ENCODE measurements at regions of chr2 and their contacts with region 1.

Region 1: DNA sequence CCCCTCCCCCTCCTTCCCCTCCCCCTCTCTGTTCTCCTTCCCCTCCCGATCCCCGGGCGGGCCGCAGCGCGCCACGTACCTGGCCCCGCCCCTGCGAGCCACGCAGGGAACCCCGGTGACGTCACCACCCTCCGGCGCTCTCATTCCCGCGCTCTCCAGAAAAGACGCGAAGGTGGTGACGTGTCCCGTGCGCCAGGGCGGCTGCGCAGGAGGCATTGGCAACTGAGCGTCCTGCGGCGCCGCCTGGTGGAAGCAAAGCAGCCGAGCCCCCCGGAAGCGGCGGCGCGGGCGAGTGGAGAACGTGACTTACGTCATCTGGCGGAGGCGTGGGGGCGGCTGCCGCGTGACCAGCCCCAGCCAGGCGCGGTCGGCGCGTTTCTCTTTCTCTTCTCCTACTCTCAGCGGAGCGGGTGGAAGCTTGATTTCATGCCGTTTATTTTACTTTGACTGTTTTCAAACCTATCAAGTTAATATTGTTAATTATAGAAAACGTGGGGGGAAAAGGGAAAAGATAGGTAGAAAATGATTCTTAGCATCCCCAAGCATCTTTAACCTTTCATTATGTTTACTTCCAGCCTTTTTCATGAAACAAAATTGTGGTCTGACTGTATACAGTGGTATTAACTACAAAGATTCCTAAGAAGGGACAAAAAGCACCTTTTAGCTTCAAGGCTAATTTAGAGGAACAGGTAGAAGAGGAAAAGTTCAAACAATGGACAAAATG is 48.1 kb downstream of the C2orf42 start:
- DNase-seq: peak; percentile 100
- ATAC-seq: peak; percentile 75
- H3K4me3 ChIP-seq: peak overlapping the region; percentile 61 to 91 (median 71)
- H3K4me3 Mint-ChIP-seq: peak overlapping the region; percentile 91
- H3K27ac ChIP-seq: peak overlapping the region; percentile 97 to 98
- H3K27ac Mint-ChIP-seq: peak overlapping the region; percentile 98
- H3K4me1 ChIP-seq: peaks cover 24 to 32% of the 10 kb centered on the region in 2 donors
- H3K4me1 Mint-ChIP-seq: peaks cover 50% of the 10 kb centered on the region
- H3K27me3 ChIP-seq: no peaks in the 10 kb centered on the region
- H3K27me3 Mint-ChIP-seq: no peaks in the 10 kb centered on the region
- CTCF ChIP-seq: peak; percentile 88

Region 2: DNA sequence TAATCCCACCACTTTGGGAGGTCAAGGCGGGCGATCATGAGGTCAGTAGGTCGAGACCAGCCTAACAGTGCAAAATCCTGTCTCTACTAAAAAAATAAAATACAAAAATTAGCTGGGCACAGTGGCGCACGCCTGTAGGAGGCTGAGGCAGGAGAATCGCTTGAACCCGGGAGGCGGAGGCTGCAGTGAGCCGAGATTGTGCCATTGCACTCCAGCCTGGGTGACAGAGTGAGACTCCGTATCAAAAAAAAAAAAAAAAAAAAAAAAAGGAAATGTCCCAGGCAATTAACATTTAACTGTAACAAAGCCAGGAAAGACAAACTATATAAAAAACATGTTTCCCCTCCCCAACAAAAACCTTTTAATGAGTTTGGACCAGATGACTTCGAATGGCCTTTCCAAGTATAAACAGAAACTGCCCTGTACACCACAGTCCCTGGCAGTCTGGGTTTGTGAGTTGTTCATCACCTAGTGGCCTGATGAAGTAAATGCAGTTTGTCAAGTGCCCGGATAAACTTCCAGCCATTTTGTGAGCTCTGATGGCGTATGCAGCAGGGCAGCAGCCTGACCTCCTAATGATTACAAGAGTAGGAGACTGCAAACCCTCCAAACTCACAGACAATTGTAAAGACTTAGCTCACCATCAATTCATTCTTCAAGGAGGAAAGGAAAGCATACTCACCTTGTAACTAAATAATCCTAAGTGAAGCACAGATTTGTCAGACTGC is 72.0 kb before region 1 on chr2:
- CTCF ChIA-PET with region 1: interaction called, 14 read pairs
- POLR2A ChIA-PET with region 1: interaction called, 11 read pairs
- intact Hi-C with region 1: loop called (anchors 1 kb)
- DNase-seq: peak; percentile 86
- ATAC-seq: peak; percentile 96
- H3K4me3 ChIP-seq: no peak overlapping the region
- H3K4me3 Mint-ChIP-seq: peak overlapping the region; percentile 63
- H3K27ac ChIP-seq: peak overlapping the region; percentile 57 to 79
- H3K27ac Mint-ChIP-seq: peak overlapping the region; percentile 88
- H3K4me1 ChIP-seq: peaks cover 32 to 33% of the 10 kb centered on the region in 2 donors
- H3K4me1 Mint-ChIP-seq: peaks cover 30% of the 10 kb centered on the region
- H3K27me3 ChIP-seq: no peaks in the 10 kb centered on the region
- H3K27me3 Mint-ChIP-seq: no peaks in the 10 kb centered on the region
- CTCF ChIP-seq: peak; percentile 79

Region 3: DNA sequence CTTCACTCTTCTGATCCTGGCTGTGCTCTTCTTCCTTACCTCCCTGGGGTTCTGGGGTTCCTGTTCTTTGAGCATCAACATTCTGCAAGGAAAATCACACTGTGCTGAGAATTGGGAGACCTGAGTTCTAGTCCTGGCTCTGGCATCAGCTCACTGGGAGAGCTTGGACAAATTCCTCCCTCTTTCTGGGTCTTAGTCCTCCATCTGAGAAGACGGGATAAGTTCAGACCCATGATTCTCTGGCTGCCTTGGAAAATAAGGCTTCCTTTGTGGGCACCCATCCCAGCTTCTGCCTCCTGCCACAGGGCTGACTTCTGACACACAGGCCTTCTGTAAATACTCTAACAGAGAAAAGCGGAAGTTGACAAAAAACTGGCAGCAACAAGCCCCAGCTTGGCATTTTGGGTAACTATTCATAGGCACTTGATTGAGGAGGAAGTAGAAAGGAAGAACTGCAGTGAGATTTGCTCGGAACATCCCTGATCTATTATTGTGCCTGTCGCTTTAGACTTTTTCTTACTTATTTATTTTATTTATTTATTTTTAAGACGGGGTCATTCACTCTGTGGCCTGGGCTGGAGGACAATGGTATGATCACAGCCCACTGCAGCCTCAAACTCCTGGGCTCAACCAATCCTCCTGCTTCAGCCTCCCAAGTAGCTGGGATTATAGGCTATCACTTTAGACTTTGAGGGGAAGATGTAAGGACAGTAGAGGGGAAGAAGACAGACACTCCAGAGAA is 47.6 kb before region 1 on chr2:
- CTCF ChIA-PET with region 1: interaction called, 98 read pairs
- POLR2A ChIA-PET with region 1: interaction called, 14 read pairs
- intact Hi-C with region 1: loop called (anchors 2 kb)
- DNase-seq: peak; percentile 90
- ATAC-seq: peak; percentile 94
- H3K4me3 ChIP-seq: peak overlapping the region; percentile 29 to 68 (median 57)
- H3K4me3 Mint-ChIP-seq: peak overlapping the region; percentile 86
- H3K27ac ChIP-seq: peak overlapping the region; percentile 83 to 87
- H3K27ac Mint-ChIP-seq: peak overlapping the region; percentile 98
- H3K4me1 ChIP-seq: peaks cover 43 to 59% of the 10 kb centered on the region in 2 donors
- H3K4me1 Mint-ChIP-seq: peaks cover 46% of the 10 kb centered on the region
- H3K27me3 ChIP-seq: no peaks in the 10 kb centered on the region
- H3K27me3 Mint-ChIP-seq: no peaks in the 10 kb centered on the region
- CTCF ChIP-seq: no peak

Region 4: DNA sequence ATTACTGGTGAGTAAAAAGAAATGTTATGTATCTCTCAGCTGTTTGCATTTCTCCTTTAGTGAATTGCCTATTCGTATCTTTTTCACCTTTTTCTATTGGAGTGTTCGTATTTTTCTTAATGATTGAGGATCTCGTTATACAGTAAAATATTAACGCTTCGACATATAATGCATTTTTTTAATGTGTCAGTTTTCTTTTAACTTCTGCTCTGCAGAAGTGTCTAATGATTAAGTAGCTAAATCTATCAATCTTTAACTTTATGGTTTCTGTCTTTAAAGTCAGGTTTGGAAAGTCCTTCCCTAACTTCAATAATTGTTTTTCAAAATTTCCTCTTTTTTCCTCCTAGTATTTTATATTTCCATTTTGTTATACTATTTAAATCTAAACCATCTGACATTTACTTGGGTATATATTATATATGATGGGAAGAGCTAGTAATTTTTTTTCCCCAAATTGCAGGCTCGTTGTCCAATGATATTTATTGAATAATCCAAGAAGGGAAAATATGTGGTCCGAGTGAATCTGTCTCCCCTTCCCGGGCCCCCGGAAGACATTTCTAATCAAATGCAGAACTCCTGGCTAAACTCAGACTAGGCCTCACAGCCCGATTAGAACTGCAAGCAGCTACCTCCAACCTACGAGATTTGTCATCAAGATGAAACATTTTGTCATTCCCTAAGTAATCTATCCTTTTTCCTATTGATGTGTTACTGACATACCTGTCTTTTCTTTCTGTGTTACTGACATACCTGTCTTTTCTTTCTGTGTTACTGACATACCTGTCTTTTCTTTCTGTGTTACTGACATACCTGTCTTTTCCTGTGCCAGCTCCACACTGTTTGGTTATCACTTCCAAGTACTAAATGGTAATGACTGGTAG is 38.3 kb before region 1 on chr2:
- CTCF ChIA-PET with region 1: interaction called, 16 read pairs
- POLR2A ChIA-PET with region 1: interaction called, 11 read pairs
- intact Hi-C with region 1: loop called (anchors 1 kb)
- DNase-seq: peak; percentile 68
- ATAC-seq: no peak
- H3K4me3 ChIP-seq: peak overlapping the region in 3 of 5 experiments; percentile 21 to 43 (median 34)
- H3K4me3 Mint-ChIP-seq: peak overlapping the region; percentile 83
- H3K27ac ChIP-seq: peak overlapping the region; percentile 73 to 79
- H3K27ac Mint-ChIP-seq: peak overlapping the region; percentile 94
- H3K4me1 ChIP-seq: peaks cover 38 to 50% of the 10 kb centered on the region in 2 donors
- H3K4me1 Mint-ChIP-seq: peaks cover 49% of the 10 kb centered on the region
- H3K27me3 ChIP-seq: no peaks in the 10 kb centered on the region
- H3K27me3 Mint-ChIP-seq: no peaks in the 10 kb centered on the region
- CTCF ChIP-seq: no peak

Region 5: GRCh38 chr2:70124983-70125480 is 17.7 kb before region 1 on chr2:
- CTCF ChIA-PET with region 1: interaction called, 13 read pairs
- POLR2A ChIA-PET with region 1: interaction called, 95 read pairs
- intact Hi-C with region 1: loop called (anchors 1 kb)
- DNase-seq: peak; percentile 95
- ATAC-seq: peak; percentile 66
- H3K4me3 ChIP-seq: peak overlapping the region; percentile 32 to 99 (median 71)
- H3K4me3 Mint-ChIP-seq: peak overlapping the region; percentile 95
- H3K27ac ChIP-seq: peak overlapping the region; percentile 100
- H3K27ac Mint-ChIP-seq: peak overlapping the region; percentile 100
- H3K4me1 ChIP-seq: peaks cover 63 to 71% of the 10 kb centered on the region in 2 donors
- H3K4me1 Mint-ChIP-seq: peaks cover 65% of the 10 kb centered on the region
- H3K27me3 ChIP-seq: no peaks in the 10 kb centered on the region
- H3K27me3 Mint-ChIP-seq: no peaks in the 10 kb centered on the region
- CTCF ChIP-seq: no peak

Region 6: DNA sequence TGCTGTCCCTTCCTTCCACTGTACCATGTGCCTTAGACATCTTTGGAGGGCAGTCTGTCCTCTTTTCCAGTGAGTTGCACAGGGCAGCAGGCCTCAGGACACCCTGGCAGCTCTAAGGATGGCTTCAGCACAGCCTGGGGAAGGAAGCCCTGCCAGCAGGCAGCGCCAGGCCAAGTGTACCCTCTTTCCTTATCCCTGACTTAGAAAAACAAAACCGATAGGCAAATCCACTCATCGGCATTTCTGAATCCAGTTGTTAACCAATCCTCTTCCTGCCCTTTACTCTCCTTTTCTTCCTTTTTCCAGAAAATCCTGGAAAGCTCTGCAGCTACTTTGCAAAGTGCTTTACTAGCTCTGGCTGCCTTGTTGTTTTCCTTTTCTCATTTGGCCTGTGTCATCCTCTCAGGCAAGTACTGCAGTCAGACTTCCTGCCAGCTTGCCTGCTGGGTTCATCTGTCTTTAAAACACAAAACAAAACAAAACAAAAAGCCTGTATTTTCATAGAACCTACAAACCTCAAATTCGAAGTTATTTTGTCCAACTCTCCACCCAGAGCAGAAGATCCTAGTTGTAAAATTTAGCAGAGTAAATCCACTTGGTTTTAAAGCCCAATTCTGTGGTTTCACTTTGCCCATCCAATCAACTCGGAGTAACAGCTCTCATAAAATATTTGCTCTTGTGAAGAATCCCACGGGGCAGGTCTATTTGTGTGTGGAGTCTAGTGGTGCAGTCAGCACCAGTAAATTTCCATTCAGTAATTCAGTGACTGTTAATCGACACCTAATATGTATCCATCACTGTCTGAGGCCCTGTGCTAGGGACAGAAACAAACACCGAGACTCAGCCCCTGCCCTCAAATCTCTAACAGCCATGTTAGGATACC is 10.3 kb before region 1 on chr2:
- CTCF ChIA-PET with region 1: interaction called, 15 read pairs
- POLR2A ChIA-PET with region 1: interaction called, 54 read pairs
- intact Hi-C with region 1: loop called (anchors 1 kb)
- DNase-seq: peak; percentile 77
- ATAC-seq: peak; percentile 74
- H3K4me3 ChIP-seq: peak overlapping the region; percentile 35 to 62 (median 53)
- H3K4me3 Mint-ChIP-seq: peak overlapping the region; percentile 87
- H3K27ac ChIP-seq: peak overlapping the region; percentile 80 to 87
- H3K27ac Mint-ChIP-seq: peak overlapping the region; percentile 96
- H3K4me1 ChIP-seq: peaks cover 52 to 61% of the 10 kb centered on the region in 2 donors
- H3K4me1 Mint-ChIP-seq: peaks cover 59% of the 10 kb centered on the region
- H3K27me3 ChIP-seq: no peaks in the 10 kb centered on the region
- H3K27me3 Mint-ChIP-seq: no peaks in the 10 kb centered on the region
- CTCF ChIP-seq: no peak

Region 7: DNA sequence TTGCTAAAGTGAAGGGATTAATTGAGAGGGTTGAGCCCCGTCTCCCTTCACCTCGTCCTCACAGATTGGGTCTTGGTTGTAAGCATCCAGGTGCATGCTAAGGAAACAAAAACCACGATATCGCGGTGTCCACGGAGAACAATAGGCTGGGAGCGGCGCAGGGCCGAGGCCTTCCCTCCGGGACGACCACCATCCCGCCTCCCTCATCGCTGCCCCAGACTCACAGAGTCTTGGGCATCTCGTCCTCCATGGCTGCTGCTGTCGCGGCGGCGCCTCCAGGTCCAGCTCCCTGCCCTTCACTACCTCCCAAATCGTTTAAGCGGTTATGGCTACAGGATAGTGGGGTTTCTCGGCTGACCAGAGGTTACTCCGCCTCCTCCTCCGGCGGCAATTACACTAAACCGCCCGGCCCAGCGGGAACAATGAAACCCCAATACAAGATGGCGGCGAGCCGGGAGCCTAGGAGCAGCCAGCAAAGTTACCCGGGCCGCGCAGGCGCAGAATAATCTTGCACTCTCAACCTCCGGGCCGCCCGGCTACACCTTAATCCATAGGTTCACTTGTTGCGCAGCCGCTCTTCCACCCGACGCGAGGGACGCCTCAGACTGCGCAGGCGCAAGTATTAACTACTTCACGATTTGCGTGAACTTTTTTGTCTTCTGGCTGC is 105.6 kb after region 1 on chr2 and contains the start of gene TIA1:
- CTCF ChIA-PET with region 1: no interaction called
- POLR2A ChIA-PET with region 1: no interaction called
- intact Hi-C with region 1: loop called (anchors 2 kb)
- DNase-seq: peak; percentile 99
- ATAC-seq: peak; percentile 96
- H3K4me3 ChIP-seq: peak within 1 kb of the TSS; percentile 70 to 98 (median 95)
- H3K4me3 Mint-ChIP-seq: peak within 1 kb of the TSS; percentile 98
- H3K27ac ChIP-seq: peak within 1 kb of the TSS; percentile 86 to 94
- H3K27ac Mint-ChIP-seq: peak within 1 kb of the TSS; percentile 98
- H3K4me1 ChIP-seq: peaks cover 24 to 29% of the 10 kb centered on the region in 2 donors
- H3K4me1 Mint-ChIP-seq: peaks cover 35% of the 10 kb centered on the region
- H3K27me3 ChIP-seq: no peaks in the 10 kb centered on the region
- H3K27me3 Mint-ChIP-seq: no peaks in the 10 kb centered on the region
- CTCF ChIP-seq: no peak
- total RNA-seq, gene TIA1: 214 and 243 TPM in 2 replicates